ENCODE measurements at regions of chr6 and their contacts with region 1.

Region 1: GRCh38 chr6:3751730-3752542 is 423 bp upstream of the PXDC1 start:
- DNase-seq: peak; percentile 94
- ATAC-seq: peak; percentile 78 to 84

Region 2: DNA sequence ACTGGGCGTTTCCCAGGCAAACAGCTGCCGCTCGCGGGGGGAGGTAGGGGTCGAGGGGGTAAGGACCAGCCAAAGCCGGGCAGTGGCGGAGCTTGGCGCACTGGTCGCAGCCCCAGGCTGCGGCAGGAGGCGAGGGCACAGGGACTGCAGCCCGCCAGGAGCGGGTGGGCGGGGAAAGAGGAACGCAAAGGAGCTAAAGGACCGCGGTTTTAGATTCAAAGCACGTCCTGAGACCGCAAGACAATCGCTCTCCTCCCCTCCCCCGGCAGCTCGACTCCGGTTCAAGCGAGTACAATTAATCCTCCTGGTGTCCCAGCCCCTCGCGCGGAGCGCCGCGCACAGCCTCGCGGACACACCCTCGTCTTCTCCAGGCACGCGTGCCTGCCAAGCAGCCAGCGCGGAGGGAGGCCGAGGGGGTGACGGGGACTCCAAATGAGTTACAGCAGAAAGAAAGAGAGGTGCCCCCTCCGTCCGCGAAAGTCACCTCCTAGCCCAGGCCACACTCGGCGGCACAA is 525.0 kb before region 1 on chr6:
- intact Hi-C with region 1: no loop called
- DNase-seq: peak; percentile 36
- ATAC-seq: peak in 1 of 2 donors; percentile 8

Region 3: GRCh38 chr6:3825851-3826581 is 74.1 kb after region 1 on chr6:
- intact Hi-C with region 1: loop called (anchors 5 to 10 kb)
- DNase-seq: peak; percentile 93
- ATAC-seq: peak; percentile 90 to 98

Region 4: DNA sequence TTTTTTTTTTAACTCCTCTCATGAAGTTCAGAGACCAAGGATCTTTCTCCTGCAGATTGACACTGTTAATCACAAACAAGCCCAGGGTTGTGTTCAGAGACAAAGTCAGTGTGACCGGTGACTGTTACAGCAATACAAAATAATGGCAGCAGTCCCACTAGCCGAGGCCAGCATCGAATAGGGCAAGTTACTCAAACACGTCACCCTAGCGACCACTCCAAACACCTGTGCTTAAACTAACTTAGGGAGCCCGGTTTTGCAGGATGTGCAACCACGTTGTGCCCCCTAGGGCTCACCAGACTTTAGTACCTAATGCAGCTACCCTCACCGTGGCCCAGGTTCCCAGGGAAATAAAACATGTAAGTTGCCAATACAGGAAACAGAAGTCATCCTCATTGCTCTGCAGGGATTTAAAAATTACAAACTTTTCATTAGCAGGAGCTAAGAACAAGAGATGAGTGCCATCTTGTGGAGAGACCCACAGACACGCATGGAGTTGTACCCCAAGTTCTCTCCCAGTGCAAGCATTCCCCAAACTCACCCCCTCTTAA is 135.3 kb after region 1 on chr6:
- intact Hi-C with region 1: loop called in 1 of 2 experiments (anchors 5 kb)
- DNase-seq: no peak
- ATAC-seq: peak; percentile 21 to 35

Measured in left cardiac atrium (tissue), 4 donors.